GM10248 (cell line): ENCODE measurements at regions of chr18 and their contacts with region 1.

Region 1: DNA sequence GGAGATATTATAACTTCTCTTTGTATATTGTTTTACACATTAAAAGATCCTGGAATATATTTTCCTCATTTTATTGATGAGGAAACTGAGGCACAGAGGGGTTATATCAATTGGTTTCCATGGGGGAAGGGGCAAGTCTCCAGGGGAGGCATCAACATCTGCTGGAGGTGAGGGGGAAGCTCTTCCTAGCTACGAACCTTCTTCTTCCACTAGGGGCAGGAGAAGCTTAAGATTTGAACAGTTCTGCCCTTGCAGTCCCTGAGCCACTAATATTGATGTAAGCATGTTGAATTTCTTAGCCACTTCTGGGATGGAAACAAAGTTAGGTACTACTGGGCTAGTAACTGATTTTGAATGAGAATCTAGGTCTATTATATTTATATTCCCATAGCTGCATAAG is 140.1 kb upstream of the AQP4 start:
- DNase-seq: peak; percentile 14
- CTCF ChIP-seq: peak; percentile 43

Region 2: GRCh38 chr18:26185267-26185666 is 820.3 kb before region 1 on chr18:
- CTCF ChIA-PET with region 1: no interaction called
- POLR2A ChIA-PET with region 1: interaction called, 10 read pairs
- DNase-seq: no peak
- CTCF ChIP-seq: no peak

Region 3: DNA sequence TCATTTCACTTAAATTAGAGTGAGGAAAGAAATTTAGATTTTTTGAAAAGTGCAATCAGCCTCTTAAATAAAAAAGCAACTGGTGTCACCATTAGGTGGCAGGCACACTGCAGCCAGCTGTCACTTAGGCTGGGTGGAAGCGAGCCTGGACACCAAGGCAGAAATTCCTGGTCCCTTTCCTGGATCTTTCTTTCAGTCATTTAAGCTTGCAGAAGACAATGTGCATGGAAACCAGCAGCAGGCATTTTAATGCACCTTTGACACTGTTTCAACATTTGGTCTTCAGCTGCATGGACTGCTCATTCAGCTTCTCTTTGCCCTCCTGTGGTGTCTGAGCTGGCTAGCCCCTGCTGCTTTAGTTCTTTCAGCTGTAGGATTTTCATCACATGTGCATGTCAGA is 201.1 kb before region 1 on chr18:
- CTCF ChIA-PET with region 1: interaction called, 11 read pairs
- POLR2A ChIA-PET with region 1: no interaction called
- DNase-seq: no peak
- CTCF ChIP-seq: peak; percentile 22